ENCODE measurements at regions of chr12 and their contacts with region 1.

Region 1: DNA sequence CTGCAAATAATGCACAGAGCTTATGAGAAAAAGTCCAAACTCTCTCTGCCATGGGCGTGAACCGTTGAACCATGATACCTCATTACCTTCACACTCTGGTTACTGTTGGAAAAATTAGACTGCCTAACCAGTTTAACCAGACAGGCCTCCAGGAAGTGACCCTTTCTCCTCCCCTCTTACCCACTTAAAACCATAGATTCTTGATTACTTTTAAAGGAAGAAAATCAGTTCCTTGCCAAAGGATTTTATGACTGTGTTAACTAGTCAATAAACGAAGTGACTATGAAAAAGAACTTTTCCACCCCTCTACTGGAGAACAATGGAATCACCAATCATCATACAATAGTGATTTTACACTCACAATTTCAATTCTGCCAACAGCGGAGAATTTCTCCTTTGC is 254.0 kb upstream of the ATP2B1 start:
- DNase-seq: no peak
- ATAC-seq: no peak
- H3K4me3 ChIP-seq: no peak overlapping the region
- H3K27ac ChIP-seq: no peak overlapping the region
- H3K4me1 ChIP-seq: no peaks in the 10 kb centered on the region
- H3K27me3 ChIP-seq: no peaks in the 10 kb centered on the region
- CTCF ChIP-seq: no peak
- POLR2A ChIP-seq: no peak
- RAD21 ChIP-seq: no peak; the same call in 1 of the 2 replicates

Region 2: DNA sequence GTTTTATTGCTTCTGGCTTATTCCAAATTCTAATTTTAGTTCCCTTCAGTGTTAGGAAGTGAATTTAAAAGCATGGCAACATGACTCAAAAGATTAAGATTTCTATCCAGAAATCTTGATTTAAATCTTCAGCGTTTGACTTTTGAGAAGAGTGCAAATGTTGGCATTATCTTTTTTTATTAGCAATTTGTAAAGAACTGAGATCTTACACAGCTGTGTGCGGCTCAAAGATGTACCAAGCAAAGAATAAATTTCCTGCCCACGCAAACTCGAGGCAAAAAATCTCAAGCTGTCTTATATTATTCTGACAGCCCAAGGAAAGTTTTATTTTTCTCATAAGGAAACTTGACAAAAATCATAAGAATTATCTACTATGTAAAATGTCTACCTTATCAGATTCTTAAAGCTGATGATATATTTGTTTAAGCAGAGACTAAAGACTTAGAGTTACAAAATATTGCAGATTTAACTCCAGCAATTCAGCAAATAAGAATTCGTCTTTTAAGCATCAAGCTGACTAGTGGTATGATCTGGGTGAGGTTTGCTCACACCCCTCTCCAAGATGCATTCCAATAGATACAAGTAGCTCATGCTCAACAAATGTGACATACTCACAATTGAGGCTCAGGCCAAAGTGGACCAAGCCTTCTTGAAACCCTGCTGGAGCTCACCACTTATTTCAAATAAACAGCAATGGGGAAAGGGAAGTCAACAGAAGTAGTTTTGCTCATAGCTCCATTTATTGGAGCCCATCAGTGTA is 389.4 kb before region 1 on chr12:
- CTCF ChIA-PET with region 1: no interaction called
- POLR2A ChIA-PET with region 1: interaction called, 17 read pairs
- dilution Hi-C with region 1: no loop called
- in situ Hi-C with region 1: no loop called
- intact Hi-C with region 1: no loop called
- DNase-seq: no peak
- ATAC-seq: no peak
- H3K4me3 ChIP-seq: no peak overlapping the region
- H3K27ac ChIP-seq: no peak overlapping the region
- H3K4me1 ChIP-seq: peaks cover 11% of the 10 kb centered on the region
- H3K27me3 ChIP-seq: no peaks in the 10 kb centered on the region
- CTCF ChIP-seq: no peak
- POLR2A ChIP-seq: no peak
- RAD21 ChIP-seq: no peak

Region 3: GRCh38 chr12:89927226-89927698 is 35.4 kb before region 1 on chr12:
- CTCF ChIA-PET with region 1: no interaction called
- POLR2A ChIA-PET with region 1: no interaction called
- dilution Hi-C with region 1: no loop called
- in situ Hi-C with region 1: no loop called
- intact Hi-C with region 1: no loop called
- DNase-seq: no peak
- ATAC-seq: no peak
- H3K4me3 ChIP-seq: no peak overlapping the region
- H3K27ac ChIP-seq: no peak overlapping the region
- H3K4me1 ChIP-seq: no peaks in the 10 kb centered on the region
- H3K27me3 ChIP-seq: no peaks in the 10 kb centered on the region
- CTCF ChIP-seq: no peak
- POLR2A ChIP-seq: no peak
- RAD21 ChIP-seq: no peak

Region 4: GRCh38 chr12:90836689-90837088 is 874.0 kb after region 1 on chr12:
- CTCF ChIA-PET with region 1: no interaction called
- POLR2A ChIA-PET with region 1: no interaction called
- dilution Hi-C with region 1: no loop called
- in situ Hi-C with region 1: no loop called
- intact Hi-C with region 1: no loop called
- DNase-seq: no peak
- ATAC-seq: peak; percentile 29; the same call in 1 of the 2 replicates
- H3K4me3 ChIP-seq: no peak overlapping the region
- H3K27ac ChIP-seq: no peak overlapping the region
- H3K4me1 ChIP-seq: no peaks in the 10 kb centered on the region
- H3K27me3 ChIP-seq: no peaks in the 10 kb centered on the region
- CTCF ChIP-seq: no peak
- POLR2A ChIP-seq: no peak
- RAD21 ChIP-seq: no peak

Measured in IMR-90 (cell line).